Right ventricle myocardium inferior (tissue), 1 donor: ENCODE measurements at regions of chr4 and their contacts with region 1.

Region 1: GRCh38 chr4:123564758-123565346 is 168.3 kb downstream of the SPRY1 start:
- DNase-seq: no peak
- ATAC-seq: peak; percentile 91

Region 2: GRCh38 chr4:123114915-123115756 is 449.7 kb before region 1 on chr4:
- intact Hi-C with region 1: loop called (anchors 5 kb)
- DNase-seq: peak; percentile 57
- ATAC-seq: peak; percentile 10

Region 3: DNA sequence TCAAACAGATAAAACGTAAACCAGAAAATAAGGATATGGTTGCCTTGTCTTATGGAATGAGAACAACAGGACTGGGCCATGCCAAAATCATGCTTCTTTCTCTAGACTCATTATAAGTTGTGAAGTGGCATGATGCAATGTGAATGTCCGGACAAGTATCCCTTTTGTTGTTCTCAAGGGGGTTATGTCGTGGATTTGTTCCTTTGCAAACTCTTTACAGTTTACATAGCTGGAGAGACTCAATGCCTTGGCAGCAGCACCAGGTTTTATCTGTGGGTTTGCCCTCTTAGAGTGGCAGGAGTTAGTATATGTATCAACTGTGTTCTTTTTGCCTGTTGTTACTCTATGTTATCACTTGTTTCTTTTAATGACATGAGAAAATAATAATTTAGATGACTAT is 126.8 kb before region 1 on chr4:
- intact Hi-C with region 1: no loop called
- DNase-seq: no peak
- ATAC-seq: no peak